A673 (cell line): ENCODE measurements at regions of chr1 and their contacts with region 1.

Region 1: GRCh38 chr1:235783148-235783776 is 83.4 kb downstream of the LYST start:
- DNase-seq: peak; percentile 42
- H3K4me3 ChIP-seq: no peak overlapping the region
- H3K27ac ChIP-seq: no peak overlapping the region
- H3K4me1 ChIP-seq: no peaks in the 10 kb centered on the region
- H3K27me3 ChIP-seq: no peaks in the 10 kb centered on the region
- CTCF ChIP-seq: peak; percentile 43; the same call in 1 of the 2 replicates

Region 2: DNA sequence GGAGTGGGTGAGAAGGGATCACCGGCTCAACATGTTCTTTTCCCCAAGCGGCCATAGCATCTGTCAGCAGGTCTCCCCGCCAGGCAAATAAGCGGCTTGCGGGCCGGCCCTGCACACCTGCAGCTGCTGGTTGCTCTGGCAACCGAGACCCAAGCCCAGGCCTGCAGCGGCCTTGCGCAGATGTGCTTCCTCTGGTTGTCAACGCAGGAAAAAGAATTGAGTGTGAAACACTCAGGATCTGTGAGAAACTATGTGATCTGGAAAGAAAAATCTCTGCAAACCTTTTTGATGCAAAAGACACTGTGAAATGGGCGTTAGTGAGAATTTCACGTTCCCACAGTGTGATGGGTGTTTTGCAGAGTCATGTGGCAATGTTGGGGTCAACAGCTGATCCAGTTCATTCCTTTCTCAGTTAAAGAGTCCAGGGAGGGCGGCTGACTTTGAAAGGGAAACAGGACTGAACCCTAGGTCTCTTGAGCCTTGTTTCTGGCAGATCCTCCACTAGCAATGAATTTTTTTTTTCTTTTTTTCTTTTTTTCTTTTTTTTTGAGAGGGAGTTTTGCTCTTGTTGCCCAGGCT is 683.0 kb before region 1 on chr1:
- CTCF ChIA-PET with region 1: no interaction called
- POLR2A ChIA-PET with region 1: no interaction called
- intact Hi-C with region 1: loop called (anchors 5 kb)
- DNase-seq: no peak
- H3K4me3 ChIP-seq: no peak overlapping the region
- H3K27ac ChIP-seq: no peak overlapping the region
- H3K4me1 ChIP-seq: peaks cover 3% of the 10 kb centered on the region
- H3K27me3 ChIP-seq: no peaks in the 10 kb centered on the region
- CTCF ChIP-seq: no peak